Mammary epithelial cell (primary cell): ENCODE measurements at regions of chr1 and their contacts with region 1.

Region 1: DNA sequence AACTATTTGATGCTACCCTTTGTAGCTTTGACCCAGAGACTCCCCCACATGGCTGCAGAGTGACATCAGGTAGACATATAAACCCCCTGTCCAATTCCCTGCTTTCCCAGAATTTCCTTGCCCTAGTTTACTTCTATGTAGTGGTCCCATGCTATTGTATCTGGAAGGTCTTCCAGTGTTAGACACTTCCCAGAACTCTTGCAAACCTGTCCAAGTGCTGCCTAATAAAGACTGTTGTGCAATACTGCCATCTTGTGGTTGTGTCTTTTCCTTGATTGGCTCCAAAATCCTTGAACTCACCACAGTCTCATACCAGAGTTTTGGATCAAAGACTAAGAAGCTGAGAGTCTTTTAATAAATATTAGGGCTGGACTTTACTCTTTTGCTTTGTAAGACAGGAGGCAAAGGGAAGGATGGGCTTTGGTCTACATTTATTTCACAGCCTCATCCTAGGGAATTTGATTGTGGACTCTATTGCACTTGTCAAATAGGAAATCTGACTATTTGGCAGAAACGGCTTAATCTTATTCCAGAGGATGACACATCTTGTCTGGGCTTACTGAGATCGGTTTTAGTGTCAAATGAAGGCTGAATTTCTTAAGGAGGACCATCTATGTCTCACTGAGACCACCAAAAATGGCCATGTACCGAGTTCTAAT is 169.9 kb downstream of the LRRC7 start:
- DNase-seq: peak; percentile 63
- H3K4me3 ChIP-seq: no peak overlapping the region
- H3K27ac ChIP-seq: no peak overlapping the region
- H3K4me1 ChIP-seq: no peaks in the 10 kb centered on the region
- H3K27me3 ChIP-seq: peaks cover 4% of the 10 kb centered on the region
- CTCF ChIP-seq: peak; percentile 74 to 80

Region 2: GRCh38 chr1:68590473-68590872 is 1147.2 kb before region 1 on chr1:
- CTCF ChIA-PET with region 1: no interaction called
- dilution Hi-C with region 1: no loop called
- in situ Hi-C with region 1: loop called in 1 of 2 experiments (anchors 25 kb)
- intact Hi-C with region 1: no loop called
- DNase-seq: peak; percentile 16
- H3K4me3 ChIP-seq: no peak overlapping the region
- H3K27ac ChIP-seq: no peak overlapping the region
- H3K4me1 ChIP-seq: no peaks in the 10 kb centered on the region
- H3K27me3 ChIP-seq: no peaks in the 10 kb centered on the region
- CTCF ChIP-seq: peak; percentile 8 to 49

Region 3: GRCh38 chr1:68819190-68819829 is 918.3 kb before region 1 on chr1:
- CTCF ChIA-PET with region 1: no interaction called
- dilution Hi-C with region 1: no loop called
- in situ Hi-C with region 1: no loop called
- intact Hi-C with region 1: loop called (anchors 1 kb)
- DNase-seq: peak; percentile 8
- H3K4me3 ChIP-seq: no peak overlapping the region
- H3K27ac ChIP-seq: no peak overlapping the region
- H3K4me1 ChIP-seq: no peaks in the 10 kb centered on the region
- H3K27me3 ChIP-seq: no peaks in the 10 kb centered on the region
- CTCF ChIP-seq: peak; percentile 23 to 51

Region 4: GRCh38 chr1:69081668-69082067 is 656.0 kb before region 1 on chr1:
- CTCF ChIA-PET with region 1: interaction called, 5 read pairs
- dilution Hi-C with region 1: no loop called
- in situ Hi-C with region 1: no loop called
- intact Hi-C with region 1: loop called (anchors 1 kb)
- DNase-seq: no peak
- H3K4me3 ChIP-seq: no peak overlapping the region
- H3K27ac ChIP-seq: no peak overlapping the region
- H3K4me1 ChIP-seq: no peaks in the 10 kb centered on the region
- H3K27me3 ChIP-seq: no peaks in the 10 kb centered on the region
- CTCF ChIP-seq: no peak

Region 5: DNA sequence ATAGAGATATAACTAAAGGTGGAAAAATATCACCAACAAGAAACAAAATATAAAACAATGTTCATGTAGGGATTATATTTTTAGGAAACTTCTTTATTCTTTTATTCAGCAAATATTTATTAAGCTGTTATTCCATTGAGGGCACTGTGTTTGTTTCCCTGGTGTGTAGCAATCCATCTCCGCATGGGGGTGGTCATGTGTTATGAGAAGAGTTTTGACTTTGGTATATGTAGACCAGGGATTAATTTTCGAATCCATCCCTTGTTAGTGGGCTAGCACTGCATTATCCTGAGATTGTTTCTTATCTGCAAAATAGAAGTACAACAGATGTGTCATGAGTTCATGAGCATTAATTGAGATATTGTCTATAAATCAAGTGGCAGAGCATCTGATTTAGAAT is 360.1 kb before region 1 on chr1:
- CTCF ChIA-PET with region 1: no interaction called
- dilution Hi-C with region 1: no loop called
- in situ Hi-C with region 1: no loop called
- intact Hi-C with region 1: loop called (anchors 1 kb)
- DNase-seq: peak; percentile 17
- H3K4me3 ChIP-seq: no peak overlapping the region
- H3K27ac ChIP-seq: no peak overlapping the region
- H3K4me1 ChIP-seq: no peaks in the 10 kb centered on the region
- H3K27me3 ChIP-seq: no peaks in the 10 kb centered on the region
- CTCF ChIP-seq: peak; percentile 8 to 35

Region 6: DNA sequence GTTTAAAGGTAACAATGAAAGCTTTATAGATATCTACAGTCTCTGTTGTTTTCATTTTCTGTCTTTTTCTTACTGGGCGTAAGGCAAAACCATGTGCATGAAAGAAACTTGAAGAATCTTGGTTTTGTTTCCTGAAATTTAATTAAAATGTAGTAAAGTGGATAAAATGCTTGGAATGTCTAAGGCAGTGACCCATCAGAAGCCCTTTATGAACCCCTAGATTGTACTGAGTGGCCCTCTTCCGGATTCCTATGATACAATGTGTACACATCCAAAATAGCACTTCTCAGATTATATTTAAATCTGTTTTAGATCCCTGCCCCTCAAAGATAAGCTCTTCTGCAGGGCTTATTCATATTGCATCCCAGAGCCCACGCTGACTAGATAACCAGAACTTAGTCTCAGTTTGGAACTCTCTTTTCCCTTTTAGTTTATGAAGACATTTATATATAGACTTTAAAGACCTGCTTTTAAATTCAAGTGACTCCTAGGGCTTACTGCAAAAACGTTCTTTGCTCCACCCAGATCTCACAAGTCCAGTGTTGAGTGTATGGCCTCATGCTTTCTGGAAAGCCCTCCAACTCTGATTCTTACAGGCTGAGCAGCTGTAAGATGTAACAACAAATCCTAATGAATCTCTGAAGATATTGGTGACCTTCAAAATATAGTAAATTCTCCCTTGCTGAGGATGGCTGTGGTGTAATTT is 27.0 kb before region 1 on chr1:
- CTCF ChIA-PET with region 1: no interaction called
- dilution Hi-C with region 1: no loop called
- in situ Hi-C with region 1: no loop called
- intact Hi-C with region 1: no loop called
- DNase-seq: no peak
- H3K4me3 ChIP-seq: no peak overlapping the region
- H3K27ac ChIP-seq: no peak overlapping the region
- H3K4me1 ChIP-seq: no peaks in the 10 kb centered on the region
- H3K27me3 ChIP-seq: no peaks in the 10 kb centered on the region
- CTCF ChIP-seq: no peak

Region 7: DNA sequence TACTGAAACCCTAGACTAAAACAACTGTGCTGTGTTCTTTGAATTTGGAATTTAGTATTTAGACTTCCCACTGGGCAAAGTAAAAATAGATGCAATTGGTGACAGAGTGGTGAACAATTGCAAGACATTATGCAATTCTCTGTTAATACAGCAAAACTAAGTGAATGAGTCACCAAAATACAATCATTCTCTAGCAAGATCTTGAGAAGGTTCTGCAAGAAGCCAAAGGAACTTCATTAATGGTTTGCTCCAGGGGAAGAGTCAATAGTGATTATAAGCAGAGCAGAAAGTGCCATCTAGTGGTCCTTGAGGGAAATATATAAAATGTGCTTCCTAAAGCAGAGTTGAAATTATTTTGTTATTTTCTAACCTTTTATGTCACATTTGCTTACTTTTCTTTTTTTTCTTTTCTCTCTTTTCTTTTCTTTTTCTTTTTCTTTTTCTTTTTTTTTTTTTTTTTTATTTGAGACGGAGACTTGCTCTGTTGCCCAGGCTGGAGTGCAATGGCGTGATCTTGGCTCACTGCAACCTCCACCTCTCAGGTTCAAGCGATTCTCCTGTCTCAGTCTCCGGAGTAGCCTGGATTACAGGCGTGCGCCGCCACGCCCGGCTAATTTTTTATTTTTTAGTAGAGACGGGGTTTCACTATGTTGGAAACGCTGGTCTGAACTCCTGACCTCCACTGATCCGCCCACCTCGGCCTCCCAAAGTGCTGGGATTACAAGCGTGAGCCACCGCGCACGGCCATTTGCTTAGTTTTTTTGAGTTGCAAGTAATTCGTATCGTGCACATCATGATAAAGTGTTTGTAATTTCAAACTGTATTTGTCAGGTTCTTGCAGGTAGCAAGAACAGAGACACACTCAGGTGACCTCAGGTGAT is 772.6 kb after region 1 on chr1:
- CTCF ChIA-PET with region 1: no interaction called
- dilution Hi-C with region 1: no loop called
- in situ Hi-C with region 1: no loop called
- intact Hi-C with region 1: loop called (anchors 10 kb)
- DNase-seq: peak; percentile 84
- H3K4me3 ChIP-seq: no peak overlapping the region
- H3K27ac ChIP-seq: no peak overlapping the region
- H3K4me1 ChIP-seq: peaks cover 13% of the 10 kb centered on the region
- H3K27me3 ChIP-seq: no peaks in the 10 kb centered on the region
- CTCF ChIP-seq: peak; percentile 63 to 66